ENCODE measurements at regions of chr12 and their contacts with region 1.

Region 1: GRCh38 chr12:6752921-6753771 is at the start of gene MLF2:
- DNase-seq: peak; percentile 99
- ATAC-seq: peak; percentile 95
- H3K4me3 Mint-ChIP-seq: peak within 1 kb of the TSS; percentile 92
- H3K27ac Mint-ChIP-seq: peak within 1 kb of the TSS; percentile 99
- H3K4me1 Mint-ChIP-seq: peaks cover 25% of the 10 kb centered on the region
- H3K27me3 Mint-ChIP-seq: no peaks in the 10 kb centered on the region
- CTCF ChIP-seq: peak; percentile 89; the same call in 1 of the 2 replicates
- total RNA-seq, gene MLF2: 226 to 236 TPM (median 229 TPM) in 3 replicates

Region 2: DNA sequence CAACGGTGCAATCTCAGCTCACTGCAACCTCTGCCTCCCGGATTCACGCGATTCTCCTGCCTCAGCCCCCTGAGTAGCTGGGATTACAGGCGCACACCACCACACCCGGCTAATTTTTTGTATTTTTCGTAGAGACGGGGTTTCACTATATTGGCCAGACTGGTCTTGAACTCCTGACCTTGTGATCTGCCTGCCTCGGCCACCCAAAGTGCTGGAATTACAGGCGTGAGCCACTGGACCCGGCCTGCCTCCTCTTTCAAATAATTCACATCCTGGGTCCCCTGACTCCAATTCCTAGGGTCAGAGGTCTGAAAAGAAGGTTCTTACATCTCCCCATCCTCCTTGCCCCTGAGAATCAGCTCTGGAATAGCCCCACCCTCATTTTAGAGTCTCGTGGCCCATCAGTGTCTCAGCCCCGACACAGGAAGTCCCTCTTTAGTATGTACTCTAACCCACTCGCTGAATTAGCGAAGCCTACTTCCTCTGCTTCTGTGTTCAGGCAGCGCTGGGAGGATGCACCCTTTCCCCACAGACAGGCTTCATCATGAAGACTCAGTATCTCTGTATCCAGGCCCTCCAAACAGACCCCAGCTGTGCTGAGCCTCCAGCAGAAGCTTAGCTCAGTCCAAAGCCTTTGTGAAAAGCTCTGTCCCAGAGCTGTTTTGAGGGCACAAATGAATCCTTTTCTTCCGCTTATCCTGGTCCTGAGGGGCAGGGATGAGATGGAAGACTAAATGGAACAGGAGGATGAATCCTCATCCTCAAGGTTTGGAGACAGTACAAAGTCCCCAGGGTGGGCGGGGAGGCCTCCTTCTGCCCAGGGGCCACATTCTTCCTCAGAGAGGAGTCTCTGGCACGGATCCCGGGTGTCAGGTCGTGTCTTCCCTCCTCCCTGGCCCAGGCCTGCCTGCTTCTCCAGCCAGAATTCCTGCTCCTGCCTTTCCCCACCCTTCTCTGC is 120.8 kb before region 1 on chr12:
- CTCF ChIA-PET with region 1: no interaction called
- POLR2A ChIA-PET with region 1: no interaction called
- DNase-seq: no peak
- ATAC-seq: no peak; the same call in 1 of the 2 replicates
- H3K4me3 Mint-ChIP-seq: no peak overlapping the region
- H3K27ac Mint-ChIP-seq: 0 out of 2 replicates have a peak overlapping the region, but pooled peaks have one; percentile 76
- H3K4me1 Mint-ChIP-seq: peaks cover 19% of the 10 kb centered on the region
- H3K27me3 Mint-ChIP-seq: peaks cover 3% of the 10 kb centered on the region
- CTCF ChIP-seq: no peak

Region 3: DNA sequence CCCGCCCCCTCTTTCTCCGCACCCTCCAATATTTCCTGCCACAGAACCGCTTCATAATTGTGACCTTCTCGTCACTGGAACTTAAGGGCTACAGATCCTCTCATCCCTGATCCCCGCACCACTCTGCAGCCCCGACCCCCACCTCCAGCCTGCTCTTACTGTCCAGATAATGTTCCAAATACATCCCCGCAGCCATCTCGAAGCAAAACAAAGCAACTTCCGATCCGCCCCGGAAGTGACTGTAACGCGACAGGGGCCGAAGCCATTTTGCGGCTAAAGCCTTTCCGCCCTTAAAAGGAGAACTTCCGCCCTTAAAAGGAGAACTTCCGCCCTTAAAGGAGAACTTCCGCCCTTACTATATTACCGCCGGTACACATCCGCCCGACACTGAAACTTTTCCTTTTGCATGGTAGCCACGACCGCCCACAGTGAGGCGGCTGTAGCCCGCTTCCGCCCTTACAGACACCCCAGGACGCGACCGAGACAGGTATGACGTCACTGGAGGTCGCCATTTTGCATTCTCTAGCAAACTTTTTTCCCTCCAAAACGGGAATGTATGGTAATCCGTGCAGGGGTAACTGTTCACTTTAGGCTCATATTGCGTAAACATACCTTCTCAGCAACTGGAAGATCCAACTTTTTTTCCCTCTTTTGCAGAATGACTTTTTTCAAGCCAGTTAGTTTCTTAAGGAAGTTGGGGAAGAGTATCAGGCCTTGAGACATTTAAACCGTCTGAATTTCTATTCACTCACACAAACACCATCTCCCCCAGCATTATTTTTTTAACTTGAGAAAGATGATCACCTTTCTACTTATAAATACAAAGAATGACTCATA is 90.0 kb before region 1 on chr12 and contains the start of gene ING4:
- CTCF ChIA-PET with region 1: no interaction called
- POLR2A ChIA-PET with region 1: no interaction called
- DNase-seq: peak; percentile 94
- ATAC-seq: peak; percentile 96
- H3K4me3 Mint-ChIP-seq: peak within 1 kb of the TSS; percentile 98
- H3K27ac Mint-ChIP-seq: peak within 1 kb of the TSS; percentile 98
- H3K4me1 Mint-ChIP-seq: peaks cover 6% of the 10 kb centered on the region
- H3K27me3 Mint-ChIP-seq: no peaks in the 10 kb centered on the region; the same call in 1 of the 2 replicates
- CTCF ChIP-seq: no peak
- total RNA-seq, gene ING4: 23.0 to 27.4 TPM (median 26.7 TPM) in 3 replicates

Region 4: DNA sequence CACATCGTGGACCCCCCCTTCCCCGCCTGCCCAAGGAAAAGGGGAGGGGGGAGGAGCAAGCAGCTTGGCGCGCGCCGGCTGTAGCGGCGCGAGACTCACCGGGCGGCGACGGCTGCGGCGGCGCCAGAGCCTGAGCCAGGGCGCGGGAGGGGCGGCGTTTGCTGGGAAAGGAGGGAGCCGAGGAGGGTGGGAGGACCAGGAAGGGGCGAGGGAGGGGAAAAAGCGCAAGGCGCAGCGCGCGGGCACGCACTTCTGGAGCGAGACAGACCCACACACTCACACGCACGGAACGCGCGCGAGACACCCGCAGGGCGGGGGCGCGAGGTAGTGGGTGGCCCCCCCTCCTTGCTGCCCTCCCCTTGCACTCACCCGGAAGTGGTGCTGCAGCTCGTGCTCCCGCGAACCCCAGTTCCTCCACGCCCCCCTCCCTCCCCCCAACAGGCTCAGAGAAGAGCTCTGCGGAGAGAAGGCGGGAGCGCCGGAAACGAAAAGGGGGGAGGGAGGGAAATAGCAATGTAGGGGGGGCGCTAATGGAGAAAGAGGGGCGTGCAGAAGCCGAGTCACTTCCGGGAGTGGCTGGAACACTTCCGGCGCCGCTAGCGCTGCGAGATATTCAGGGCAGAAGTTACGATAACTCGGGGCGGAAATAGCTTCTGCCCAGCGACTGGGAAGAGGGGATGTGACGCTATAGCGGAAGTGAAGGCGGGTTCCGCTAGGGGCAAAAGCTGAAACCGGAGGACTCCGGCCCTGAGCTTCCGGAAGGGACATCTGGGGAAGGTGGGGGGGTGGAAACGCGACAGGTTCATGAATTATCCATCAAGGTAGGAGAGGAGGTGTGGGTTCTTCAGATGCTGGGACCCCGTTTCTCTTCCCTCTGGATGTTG is 63.9 kb before region 1 on chr12 and contains the start of gene ZNF384:
- CTCF ChIA-PET with region 1: interaction called, 10 read pairs
- POLR2A ChIA-PET with region 1: interaction called, 12 read pairs
- DNase-seq: peak; percentile 95
- ATAC-seq: peak; percentile 81
- H3K4me3 Mint-ChIP-seq: peak within 1 kb of the TSS; percentile 86
- H3K27ac Mint-ChIP-seq: peak within 1 kb of the TSS; percentile 95
- H3K4me1 Mint-ChIP-seq: peaks cover 23% of the 10 kb centered on the region
- H3K27me3 Mint-ChIP-seq: 0 out of 2 replicates have a peak, but pooled peaks cover under 1% of the 10 kb centered on the region
- CTCF ChIP-seq: no peak
- total RNA-seq, gene ZNF384: 63.8 to 64.7 TPM (median 64.4 TPM) in 3 replicates

Region 5: GRCh38 chr12:6764011-6764828 is 11.1 kb after region 1 on chr12:
- CTCF ChIA-PET with region 1: interaction called, 234 read pairs
- POLR2A ChIA-PET with region 1: interaction called, 84 read pairs
- DNase-seq: peak; percentile 96
- ATAC-seq: peak; percentile 56
- H3K4me3 Mint-ChIP-seq: peak overlapping the region; percentile 62
- H3K27ac Mint-ChIP-seq: peak overlapping the region; percentile 89
- H3K4me1 Mint-ChIP-seq: peaks cover 56% of the 10 kb centered on the region
- H3K27me3 Mint-ChIP-seq: peaks cover 7% of the 10 kb centered on the region
- CTCF ChIP-seq: no peak

Region 6: GRCh38 chr12:6778574-6779550 is 25.7 kb after region 1 on chr12:
- CTCF ChIA-PET with region 1: interaction called, 88 read pairs
- POLR2A ChIA-PET with region 1: interaction called, 22 read pairs
- DNase-seq: peak; percentile 97
- ATAC-seq: peak; percentile 92
- H3K4me3 Mint-ChIP-seq: peak overlapping the region; percentile 95
- H3K27ac Mint-ChIP-seq: peak overlapping the region; percentile 77
- H3K4me1 Mint-ChIP-seq: peaks cover 30% of the 10 kb centered on the region
- H3K27me3 Mint-ChIP-seq: peaks cover 44% of the 10 kb centered on the region
- CTCF ChIP-seq: peak; percentile 88

Region 7: DNA sequence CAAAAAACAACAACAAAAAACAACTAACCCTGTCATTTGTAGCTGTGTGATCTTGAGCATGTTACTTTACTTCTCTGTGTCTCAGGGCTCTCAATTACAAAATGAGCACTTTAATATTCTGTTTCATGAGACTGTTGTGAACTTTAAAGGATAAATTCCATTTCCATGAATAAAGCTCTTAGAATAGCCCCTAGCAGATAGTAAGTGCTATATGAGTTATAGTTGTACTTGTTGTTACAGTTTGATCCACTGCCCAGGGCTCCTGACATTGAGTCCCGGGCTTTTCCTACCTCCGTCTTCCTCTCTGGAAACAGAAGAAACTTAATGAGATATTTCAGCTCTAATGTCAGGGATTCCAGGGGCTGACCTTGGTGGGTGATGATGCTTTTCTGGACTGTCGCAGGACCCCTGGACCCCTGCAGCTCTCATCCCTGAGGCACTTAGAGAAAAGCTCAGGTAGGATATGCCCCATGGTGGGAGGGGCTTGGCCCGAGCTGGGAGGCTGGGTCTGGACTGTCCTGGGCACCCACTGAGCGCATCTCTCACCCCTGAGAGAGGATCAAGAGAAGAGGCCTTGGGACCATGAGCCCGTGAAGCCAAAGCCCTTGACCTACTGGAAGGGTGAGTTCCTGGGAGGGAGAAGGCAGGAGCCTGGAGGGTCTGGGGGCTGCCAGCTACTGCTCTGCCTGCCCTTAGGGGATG is 80.2 kb after region 1 on chr12:
- CTCF ChIA-PET with region 1: interaction called, 46 read pairs
- POLR2A ChIA-PET with region 1: interaction called, 3 read pairs
- DNase-seq: no peak
- ATAC-seq: no peak
- H3K4me3 Mint-ChIP-seq: no peak overlapping the region
- H3K27ac Mint-ChIP-seq: no peak overlapping the region
- H3K4me1 Mint-ChIP-seq: peaks cover 18% of the 10 kb centered on the region
- H3K27me3 Mint-ChIP-seq: no peaks in the 10 kb centered on the region
- CTCF ChIP-seq: no peak

Region 8: DNA sequence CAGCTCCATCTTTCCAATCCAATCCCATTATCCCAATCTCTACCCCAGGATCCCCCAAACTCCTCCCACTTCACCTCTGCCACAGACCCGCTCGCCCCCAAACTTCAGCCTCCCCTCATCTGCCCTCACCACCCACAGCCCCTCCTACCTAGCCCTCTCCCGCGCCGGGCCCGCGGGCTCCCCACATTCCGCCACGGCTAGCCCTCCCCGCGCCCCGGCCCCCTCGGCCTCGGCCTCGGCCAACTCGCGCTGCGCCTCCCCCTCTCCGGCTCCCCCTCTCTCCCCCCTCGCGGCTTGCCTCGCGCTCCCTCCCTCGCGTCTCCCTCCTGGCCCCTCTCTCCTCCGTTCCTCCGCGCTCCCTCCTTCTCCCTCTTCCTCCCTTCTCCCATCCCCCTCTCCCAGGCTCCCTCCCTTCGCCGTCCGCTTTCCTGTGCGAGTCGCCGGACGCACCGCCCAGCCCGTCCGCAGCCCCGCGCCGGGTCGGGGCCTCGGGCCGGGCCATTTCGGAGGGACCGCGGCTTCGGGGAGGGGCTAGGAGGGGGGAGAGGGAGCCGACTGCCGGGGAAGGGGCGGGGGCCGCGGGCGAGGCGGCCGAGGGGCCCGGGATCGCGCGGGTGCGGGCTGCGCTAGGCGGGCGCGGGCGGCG is 174.4 kb after region 1 on chr12 and contains the start of gene ATN1:
- CTCF ChIA-PET with region 1: interaction called, 10 read pairs
- POLR2A ChIA-PET with region 1: no interaction called
- DNase-seq: peak; percentile 86
- ATAC-seq: peak; percentile 19
- H3K4me3 Mint-ChIP-seq: peak within 1 kb of the TSS; percentile 94
- H3K27ac Mint-ChIP-seq: peak within 1 kb of the TSS; percentile 98
- H3K4me1 Mint-ChIP-seq: peaks cover 58% of the 10 kb centered on the region
- H3K27me3 Mint-ChIP-seq: no peaks in the 10 kb centered on the region
- CTCF ChIP-seq: no peak
- total RNA-seq, gene ATN1: 80.0 to 87.1 TPM (median 80.5 TPM) in 3 replicates